CD4-positive, alpha-beta memory T cell (primary cell): ENCODE measurements at regions of chr4 and their contacts with region 1.

Region 1: GRCh38 chr4:89307446-89308160 is at the start of gene GPRIN3:
- DNase-seq: peak; percentile 65 to 83 (median 68)
- H3K4me3 ChIP-seq: peak within 1 kb of the TSS; percentile 85 to 100
- H3K4me3 Mint-ChIP-seq: peak within 1 kb of the TSS; percentile 95 to 100 (median 99)
- H3K27ac ChIP-seq: peak within 1 kb of the TSS; percentile 87
- H3K27ac Mint-ChIP-seq: peak within 1 kb of the TSS; percentile 87 to 99 (median 98)
- H3K4me1 ChIP-seq: peaks cover 52% of the 10 kb centered on the region
- H3K4me1 Mint-ChIP-seq: peaks cover 34 to 74% (median 48%) of the 10 kb centered on the region in 4 donors
- H3K27me3 ChIP-seq: no peaks in the 10 kb centered on the region
- H3K27me3 Mint-ChIP-seq: no peaks in the 10 kb centered on the region
- total RNA-seq, gene GPRIN3: 32.5 TPM

Region 2: DNA sequence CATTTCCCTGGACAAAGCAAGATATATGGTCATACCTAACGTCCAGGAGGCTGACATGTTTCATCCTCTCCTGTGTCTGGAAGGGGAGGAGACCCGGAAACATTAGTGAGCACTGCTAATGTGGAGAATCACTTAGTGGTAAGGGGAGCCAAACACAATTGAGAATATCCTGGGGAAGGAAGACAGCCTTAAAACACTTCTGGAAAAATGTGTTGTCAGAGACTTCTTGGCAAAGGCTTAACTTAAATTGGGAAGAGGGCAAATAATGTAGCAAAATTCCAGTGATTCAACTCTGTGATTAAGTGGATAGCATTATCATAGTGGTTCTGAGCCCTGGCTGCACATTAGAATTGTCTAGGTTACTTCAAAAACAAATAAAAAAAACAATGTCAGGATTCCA is 1817.9 kb before region 1 on chr4:
- CTCF ChIA-PET with region 1: no interaction called
- POLR2A ChIA-PET with region 1: no interaction called
- intact Hi-C with region 1: no loop called
- DNase-seq: no peak
- H3K4me3 ChIP-seq: no peak overlapping the region
- H3K4me3 Mint-ChIP-seq: no peak overlapping the region
- H3K27ac ChIP-seq: no peak overlapping the region
- H3K27ac Mint-ChIP-seq: no peak overlapping the region
- H3K4me1 ChIP-seq: no peaks in the 10 kb centered on the region
- H3K4me1 Mint-ChIP-seq: no peaks in the 10 kb centered on the region
- H3K27me3 ChIP-seq: no peaks in the 10 kb centered on the region
- H3K27me3 Mint-ChIP-seq: no peaks in the 10 kb centered on the region

Region 3: GRCh38 chr4:88985088-88985773 is 322.4 kb before region 1 on chr4:
- CTCF ChIA-PET with region 1: no interaction called
- POLR2A ChIA-PET with region 1: no interaction called
- intact Hi-C with region 1: no loop called
- DNase-seq: no peak
- H3K4me3 ChIP-seq: no peak overlapping the region
- H3K4me3 Mint-ChIP-seq: no peak overlapping the region
- H3K27ac ChIP-seq: no peak overlapping the region
- H3K27ac Mint-ChIP-seq: no peak overlapping the region
- H3K4me1 ChIP-seq: no peaks in the 10 kb centered on the region
- H3K4me1 Mint-ChIP-seq: no peaks in the 10 kb centered on the region
- H3K27me3 ChIP-seq: no peaks in the 10 kb centered on the region
- H3K27me3 Mint-ChIP-seq: peaks cover 0 to 2% of the 10 kb centered on the region in 2 donors

Region 4: DNA sequence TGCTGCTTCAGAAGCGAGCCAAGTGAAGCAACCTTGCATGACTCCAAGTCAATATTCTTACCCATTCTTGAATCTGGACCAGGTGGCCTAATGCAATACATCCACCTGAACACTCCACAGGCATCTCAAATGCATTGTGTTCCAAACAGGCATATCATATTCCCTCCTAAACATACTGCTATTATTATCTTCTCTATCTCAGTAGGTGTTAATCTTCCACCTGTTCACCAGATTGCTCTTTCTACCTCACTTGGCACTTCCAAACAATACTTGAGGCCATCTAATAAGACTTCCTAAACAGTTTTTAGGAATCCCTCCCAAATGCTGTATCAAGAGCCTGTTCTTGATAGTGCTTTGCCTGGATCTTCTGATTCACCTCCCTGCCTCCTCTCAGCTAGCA is 90.7 kb before region 1 on chr4:
- CTCF ChIA-PET with region 1: no interaction called
- POLR2A ChIA-PET with region 1: no interaction called
- intact Hi-C with region 1: no loop called
- DNase-seq: no peak
- H3K4me3 ChIP-seq: no peak overlapping the region
- H3K4me3 Mint-ChIP-seq: no peak overlapping the region
- H3K27ac ChIP-seq: no peak overlapping the region
- H3K27ac Mint-ChIP-seq: no peak overlapping the region
- H3K4me1 ChIP-seq: no peaks in the 10 kb centered on the region
- H3K4me1 Mint-ChIP-seq: no peaks in the 10 kb centered on the region
- H3K27me3 ChIP-seq: no peaks in the 10 kb centered on the region
- H3K27me3 Mint-ChIP-seq: peaks cover 3 to 4% of the 10 kb centered on the region in 2 donors

Region 5: DNA sequence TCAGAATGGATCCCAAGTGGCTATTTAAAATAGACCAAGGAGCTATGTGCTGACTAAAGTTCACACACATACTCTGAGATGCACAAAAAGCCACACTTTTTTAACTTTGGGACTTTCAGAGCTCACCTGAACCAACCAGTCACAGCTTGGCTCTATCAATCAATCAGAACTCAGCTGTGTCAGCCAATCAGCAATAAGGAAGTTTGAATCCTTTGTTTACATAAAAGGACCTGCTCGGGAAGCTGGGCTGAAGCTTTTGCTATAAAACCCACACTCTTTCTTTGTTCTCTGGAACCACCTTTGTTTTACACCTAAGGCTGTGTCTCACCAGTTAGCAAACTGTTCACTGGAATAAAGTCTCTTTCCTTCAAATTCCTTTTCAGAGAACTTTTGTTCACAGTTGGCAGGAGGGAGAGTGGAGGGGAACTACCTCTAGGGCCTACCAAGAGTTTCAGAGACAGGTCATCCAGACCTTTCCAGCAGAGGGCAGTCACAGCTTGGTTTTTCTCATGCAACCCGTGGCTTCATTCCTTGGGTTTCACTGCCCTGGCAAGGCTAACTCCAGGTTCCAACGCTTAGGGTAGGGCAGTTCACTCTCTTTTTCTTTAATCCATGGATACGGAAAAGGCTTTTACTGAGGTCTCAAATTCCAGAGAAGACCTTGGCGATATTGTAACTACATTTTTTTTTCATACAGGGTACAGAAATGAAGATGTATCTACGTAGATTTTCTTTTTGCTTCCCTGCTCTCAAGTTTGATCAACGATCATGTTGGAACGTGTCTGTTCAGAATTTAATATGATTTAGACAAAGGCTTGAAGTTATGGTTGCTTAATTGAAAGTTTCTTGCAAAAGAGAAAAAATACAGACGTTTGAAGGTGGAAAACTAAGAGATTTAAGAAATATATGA is 80.7 kb before region 1 on chr4:
- CTCF ChIA-PET with region 1: interaction called, 7 read pairs
- POLR2A ChIA-PET with region 1: interaction called, 6 read pairs
- intact Hi-C with region 1: loop called (anchors 1 kb)
- DNase-seq: peak; percentile 71 to 76 (median 73)
- H3K4me3 ChIP-seq: no peak overlapping the region
- H3K4me3 Mint-ChIP-seq: peak overlapping the region; percentile 27 to 76 (median 57)
- H3K27ac ChIP-seq: no peak overlapping the region
- H3K27ac Mint-ChIP-seq: peak overlapping the region; percentile 4 to 83 (median 58)
- H3K4me1 ChIP-seq: peaks cover 4% of the 10 kb centered on the region
- H3K4me1 Mint-ChIP-seq: peaks cover 1 to 5% (median 3%) of the 10 kb centered on the region in 4 donors
- H3K27me3 ChIP-seq: no peaks in the 10 kb centered on the region
- H3K27me3 Mint-ChIP-seq: no peaks in the 10 kb centered on the region

Region 6: GRCh38 chr4:89248879-89249281 is 58.7 kb before region 1 on chr4:
- CTCF ChIA-PET with region 1: interaction called, 285 read pairs
- POLR2A ChIA-PET with region 1: interaction called, 176 read pairs
- intact Hi-C with region 1: loop called (anchors 1 kb)
- DNase-seq: no peak
- H3K4me3 ChIP-seq: no peak overlapping the region
- H3K4me3 Mint-ChIP-seq: no peak overlapping the region
- H3K27ac ChIP-seq: no peak overlapping the region
- H3K27ac Mint-ChIP-seq: no peak overlapping the region
- H3K4me1 ChIP-seq: peaks cover 69% of the 10 kb centered on the region
- H3K4me1 Mint-ChIP-seq: peaks cover 56 to 92% (median 76%) of the 10 kb centered on the region in 4 donors
- H3K27me3 ChIP-seq: no peaks in the 10 kb centered on the region
- H3K27me3 Mint-ChIP-seq: no peaks in the 10 kb centered on the region

Region 7: DNA sequence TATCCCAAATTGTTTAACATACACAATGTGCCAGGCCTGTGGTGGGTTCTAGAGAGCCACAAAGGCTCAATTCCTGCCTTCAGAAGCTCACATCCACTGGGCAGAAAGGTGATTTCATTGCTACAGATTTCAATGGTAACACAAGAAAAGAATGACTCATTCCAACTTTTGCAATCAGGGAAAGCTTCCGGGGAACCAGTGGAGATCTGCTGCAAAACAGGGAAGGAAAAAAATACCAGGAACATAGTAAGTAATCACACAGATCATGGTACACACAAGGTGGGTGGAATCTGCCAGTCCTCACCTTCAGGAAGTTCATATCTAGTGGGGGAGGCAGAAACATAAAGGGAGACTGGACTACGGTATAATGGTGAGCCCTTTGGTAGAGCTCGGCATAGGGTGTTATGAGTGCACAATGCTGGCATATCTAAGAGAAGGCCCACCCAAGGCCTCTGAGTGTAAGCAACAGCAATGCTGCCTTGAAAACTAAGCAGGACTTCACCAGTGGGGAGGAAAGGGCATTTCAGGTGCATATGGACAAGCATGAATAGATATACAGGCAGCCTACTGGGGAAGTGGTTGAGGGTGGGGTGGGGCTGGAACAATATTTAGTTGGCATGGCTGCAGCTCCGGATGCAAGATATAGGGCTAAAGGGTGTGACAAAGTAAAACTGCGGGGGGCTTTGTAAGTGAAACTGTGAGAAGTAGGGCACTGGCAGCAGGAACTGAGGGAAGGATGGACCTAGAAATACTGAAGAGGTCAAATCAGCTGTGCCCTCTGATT is 24.2 kb before region 1 on chr4:
- CTCF ChIA-PET with region 1: interaction called, 64 read pairs
- POLR2A ChIA-PET with region 1: interaction called, 453 read pairs
- intact Hi-C with region 1: loop called (anchors 1 kb)
- DNase-seq: peak; percentile 83 to 89 (median 88)
- H3K4me3 ChIP-seq: peak overlapping the region; percentile 9 to 26
- H3K4me3 Mint-ChIP-seq: peak overlapping the region; percentile 83 to 91 (median 86)
- H3K27ac ChIP-seq: peak overlapping the region; percentile 86
- H3K27ac Mint-ChIP-seq: peak overlapping the region in 3 of 7 donors; percentile 99 to 100 (median 99)
- H3K4me1 ChIP-seq: peaks cover 97% of the 10 kb centered on the region
- H3K4me1 Mint-ChIP-seq: peaks cover 32 to 68% (median 47%) of the 10 kb centered on the region in 4 donors
- H3K27me3 ChIP-seq: no peaks in the 10 kb centered on the region
- H3K27me3 Mint-ChIP-seq: no peaks in the 10 kb centered on the region

Region 8: DNA sequence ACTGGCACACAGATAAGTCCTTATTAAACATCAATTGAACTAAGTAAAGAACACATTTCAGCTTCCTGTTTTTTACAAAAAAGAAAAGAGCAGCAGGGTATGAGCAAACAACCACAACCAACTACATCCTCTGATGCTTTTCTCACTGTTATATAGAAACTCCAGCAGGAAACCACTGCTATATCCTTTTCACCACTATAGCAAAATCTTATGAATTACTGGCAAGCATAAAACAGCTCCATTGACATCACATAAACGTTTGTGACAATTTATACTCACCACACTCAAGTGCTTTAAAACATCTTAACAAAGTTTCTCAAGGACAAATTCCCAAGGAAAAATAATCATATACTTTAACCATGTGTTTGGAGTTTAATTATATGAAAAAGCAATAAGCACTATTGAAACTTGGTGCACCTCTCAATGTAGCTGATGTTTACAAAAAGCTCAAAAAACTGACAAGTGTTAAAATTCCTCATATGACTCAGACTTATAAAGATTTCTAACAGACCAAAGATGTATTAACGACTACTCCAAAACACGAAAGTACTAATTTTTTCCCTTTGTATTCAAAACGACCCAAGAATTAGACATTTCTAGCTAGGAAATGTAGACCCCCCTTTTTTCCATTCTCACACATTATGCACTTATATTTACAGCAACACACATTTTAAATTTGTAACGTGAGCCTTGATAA is 12.9 kb before region 1 on chr4:
- CTCF ChIA-PET with region 1: interaction called, 14 read pairs
- POLR2A ChIA-PET with region 1: interaction called, 453 read pairs
- intact Hi-C with region 1: loop called (anchors 1 kb)
- DNase-seq: peak; percentile 62 to 87 (median 79)
- H3K4me3 ChIP-seq: peak overlapping the region in 1 of 2 donors; percentile 51
- H3K4me3 Mint-ChIP-seq: peak overlapping the region; percentile 70 to 91 (median 80)
- H3K27ac ChIP-seq: peak overlapping the region; percentile 70
- H3K27ac Mint-ChIP-seq: peak overlapping the region; percentile 94 to 98 (median 97)
- H3K4me1 ChIP-seq: peaks cover 92% of the 10 kb centered on the region
- H3K4me1 Mint-ChIP-seq: peaks cover 63 to 98% (median 78%) of the 10 kb centered on the region in 4 donors
- H3K27me3 ChIP-seq: no peaks in the 10 kb centered on the region
- H3K27me3 Mint-ChIP-seq: no peaks in the 10 kb centered on the region

Region 9: DNA sequence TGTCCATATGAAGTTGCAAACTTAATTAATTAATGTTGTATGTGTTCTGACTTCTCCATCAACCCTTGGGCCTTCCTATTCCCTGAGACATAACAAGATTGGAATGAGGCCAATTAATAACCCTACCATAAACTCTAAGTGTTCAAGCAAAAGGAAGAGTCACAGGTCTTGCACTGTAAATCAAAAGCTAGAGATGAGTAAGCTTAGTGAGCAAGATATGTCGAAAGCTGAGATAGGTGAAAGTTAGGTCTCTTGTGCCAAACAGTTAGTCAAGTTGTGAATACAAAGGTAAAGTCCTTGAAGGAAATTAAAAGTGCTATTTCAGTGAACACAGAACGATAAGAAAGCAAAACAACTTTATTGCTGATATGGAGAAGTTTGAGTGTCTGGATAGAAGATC is 58.2 kb after region 1 on chr4:
- CTCF ChIA-PET with region 1: no interaction called
- POLR2A ChIA-PET with region 1: no interaction called
- intact Hi-C with region 1: no loop called
- DNase-seq: no peak
- H3K4me3 ChIP-seq: no peak overlapping the region
- H3K4me3 Mint-ChIP-seq: peak overlapping the region in 1 of 8 donors; percentile 7
- H3K27ac ChIP-seq: no peak overlapping the region
- H3K27ac Mint-ChIP-seq: no peak overlapping the region
- H3K4me1 ChIP-seq: no peaks in the 10 kb centered on the region
- H3K4me1 Mint-ChIP-seq: peaks cover 0 to 9% (median 5%) of the 10 kb centered on the region in 4 donors
- H3K27me3 ChIP-seq: no peaks in the 10 kb centered on the region
- H3K27me3 Mint-ChIP-seq: peaks cover 3 to 4% of the 10 kb centered on the region in 2 donors